HepG2 (cell line): ENCODE measurements at regions of chr3 and their contacts with region 1.

Region 1: GRCh38 chr3:187745201-187746058 is at the start of gene BCL6:
- DNase-seq: peak; percentile 97
- ATAC-seq: peak; percentile 28
- H3K4me3 ChIP-seq: peak within 1 kb of the TSS; percentile 98 to 100 (median 99)
- H3K27ac ChIP-seq: peak within 1 kb of the TSS; percentile 100
- H3K4me1 ChIP-seq: peaks cover 40% of the 10 kb centered on the region
- H3K27me3 ChIP-seq: peaks cover 0 to 5% of the 10 kb centered on the region in 2 experiments; a peak in 1 of 5 replicates
- CTCF ChIP-seq: no peak
- EP300 ChIP-seq: peak; percentile 64 to 69; a peak in 3 of 4 replicates
- POLR2A ChIP-seq: peak; percentile 69 to 82
- RAD21 ChIP-seq: 0 out of 2 replicates have a peak, but pooled peaks have one; percentile 13
- total RNA-seq, gene BCL6: 20.3 and 21.2 TPM in 2 replicates

Region 2: GRCh38 chr3:187507268-187507667 is 238.2 kb before region 1 on chr3:
- CTCF ChIA-PET with region 1: no interaction called
- POLR2A ChIA-PET with region 1: no interaction called
- in situ Hi-C with region 1: no loop called
- intact Hi-C with region 1: no loop called
- DNase-seq: no peak
- ATAC-seq: no peak
- H3K4me3 ChIP-seq: no peak overlapping the region
- H3K27ac ChIP-seq: no peak overlapping the region
- H3K4me1 ChIP-seq: peaks cover 11% of the 10 kb centered on the region; the same call in 1 of the 2 replicates
- H3K27me3 ChIP-seq: no peaks in the 10 kb centered on the region; a peak in 1 of 5 replicates
- CTCF ChIP-seq: no peak
- EP300 ChIP-seq: no peak
- POLR2A ChIP-seq: no peak
- RAD21 ChIP-seq: no peak

Region 3: GRCh38 chr3:187850331-187850921 is 105.0 kb after region 1 on chr3:
- CTCF ChIA-PET with region 1: no interaction called
- POLR2A ChIA-PET with region 1: interaction called, 10 read pairs
- in situ Hi-C with region 1: no loop called
- intact Hi-C with region 1: no loop called
- DNase-seq: peak; percentile 33
- ATAC-seq: peak; percentile 12; the same call in 1 of the 3 replicates
- H3K4me3 ChIP-seq: no peak overlapping the region
- H3K27ac ChIP-seq: no peak overlapping the region
- H3K4me1 ChIP-seq: peaks cover 46% of the 10 kb centered on the region
- H3K27me3 ChIP-seq: no peaks in the 10 kb centered on the region
- CTCF ChIP-seq: no peak
- EP300 ChIP-seq: peak in 1 of 2 experiments; percentile 34; a peak in 1 of 4 replicates
- POLR2A ChIP-seq: no peak
- RAD21 ChIP-seq: no peak

Region 4: DNA sequence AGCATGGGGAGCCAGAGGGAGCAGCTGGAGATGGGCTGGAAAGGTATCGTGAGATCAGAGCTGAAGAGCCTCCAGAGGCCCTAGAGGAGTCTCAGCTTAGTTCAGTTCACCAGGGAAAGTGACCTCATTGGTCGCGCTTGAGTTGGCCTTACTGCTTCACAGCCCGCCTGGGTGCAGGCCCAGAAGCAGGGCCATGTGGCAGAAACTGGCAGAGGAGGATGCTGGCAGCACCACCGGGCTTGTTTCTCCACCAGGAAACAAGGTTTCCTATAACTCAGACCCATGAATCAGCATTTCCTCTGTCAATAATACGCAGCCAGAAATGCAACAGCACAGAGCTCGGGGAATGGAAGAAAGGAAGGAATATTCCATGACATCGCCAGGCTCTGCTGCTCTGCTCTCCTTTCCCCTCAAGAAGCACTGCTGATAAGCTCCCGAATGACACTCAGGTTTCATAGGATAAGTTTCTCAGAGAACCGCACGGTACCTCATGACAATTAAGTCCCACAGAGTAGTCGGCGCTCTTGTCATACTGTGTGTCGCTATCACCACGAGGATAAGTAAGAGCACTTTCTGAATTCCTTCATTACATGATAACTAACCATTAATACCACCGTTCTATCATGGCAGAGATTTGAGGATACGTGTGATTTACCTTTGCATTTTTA is 261.4 kb after region 1 on chr3:
- CTCF ChIA-PET with region 1: no interaction called
- POLR2A ChIA-PET with region 1: interaction called, 64 read pairs
- in situ Hi-C with region 1: loop called (anchors 10 kb)
- intact Hi-C with region 1: loop called (anchors 1 kb)
- DNase-seq: no peak
- ATAC-seq: no peak
- H3K4me3 ChIP-seq: no peak overlapping the region
- H3K27ac ChIP-seq: no peak overlapping the region
- H3K4me1 ChIP-seq: peaks cover 53% of the 10 kb centered on the region
- H3K27me3 ChIP-seq: no peaks in the 10 kb centered on the region
- CTCF ChIP-seq: no peak
- EP300 ChIP-seq: no peak
- POLR2A ChIP-seq: no peak
- RAD21 ChIP-seq: no peak

Region 5: GRCh38 chr3:188154014-188154808 is 408.8 kb after region 1 on chr3 and contains the start of gene LPP:
- CTCF ChIA-PET with region 1: interaction called, 3 read pairs
- POLR2A ChIA-PET with region 1: interaction called, 11 read pairs
- in situ Hi-C with region 1: loop called (anchors 5 kb)
- intact Hi-C with region 1: loop called (anchors 1 kb)
- DNase-seq: peak; percentile 47
- ATAC-seq: peak; percentile 88
- H3K4me3 ChIP-seq: peak within 1 kb of the TSS; percentile 83 to 92 (median 88)
- H3K27ac ChIP-seq: peak within 1 kb of the TSS; percentile 73
- H3K4me1 ChIP-seq: peaks cover 64% of the 10 kb centered on the region
- H3K27me3 ChIP-seq: no peaks in the 10 kb centered on the region
- CTCF ChIP-seq: peak; percentile 39
- EP300 ChIP-seq: peak in 1 of 2 experiments; percentile 4; a peak in 1 of 4 replicates
- POLR2A ChIP-seq: no peak; a peak in 1 of 4 replicates
- RAD21 ChIP-seq: peak; percentile 44
- total RNA-seq, gene LPP: 29.9 and 41.6 TPM in 2 replicates

Region 6: GRCh38 chr3:188578576-188579363 is 833.3 kb after region 1 on chr3:
- CTCF ChIA-PET with region 1: no interaction called
- POLR2A ChIA-PET with region 1: no interaction called
- in situ Hi-C with region 1: loop called (anchors 25 kb)
- intact Hi-C with region 1: no loop called
- DNase-seq: no peak
- ATAC-seq: no peak
- H3K4me3 ChIP-seq: no peak overlapping the region
- H3K27ac ChIP-seq: no peak overlapping the region
- H3K4me1 ChIP-seq: peaks cover 34% of the 10 kb centered on the region
- H3K27me3 ChIP-seq: no peaks in the 10 kb centered on the region
- CTCF ChIP-seq: no peak
- EP300 ChIP-seq: no peak
- POLR2A ChIP-seq: no peak
- RAD21 ChIP-seq: no peak